SK-N-SH (cell line): ENCODE measurements at regions of chr2 and their contacts with region 1.

Region 1: DNA sequence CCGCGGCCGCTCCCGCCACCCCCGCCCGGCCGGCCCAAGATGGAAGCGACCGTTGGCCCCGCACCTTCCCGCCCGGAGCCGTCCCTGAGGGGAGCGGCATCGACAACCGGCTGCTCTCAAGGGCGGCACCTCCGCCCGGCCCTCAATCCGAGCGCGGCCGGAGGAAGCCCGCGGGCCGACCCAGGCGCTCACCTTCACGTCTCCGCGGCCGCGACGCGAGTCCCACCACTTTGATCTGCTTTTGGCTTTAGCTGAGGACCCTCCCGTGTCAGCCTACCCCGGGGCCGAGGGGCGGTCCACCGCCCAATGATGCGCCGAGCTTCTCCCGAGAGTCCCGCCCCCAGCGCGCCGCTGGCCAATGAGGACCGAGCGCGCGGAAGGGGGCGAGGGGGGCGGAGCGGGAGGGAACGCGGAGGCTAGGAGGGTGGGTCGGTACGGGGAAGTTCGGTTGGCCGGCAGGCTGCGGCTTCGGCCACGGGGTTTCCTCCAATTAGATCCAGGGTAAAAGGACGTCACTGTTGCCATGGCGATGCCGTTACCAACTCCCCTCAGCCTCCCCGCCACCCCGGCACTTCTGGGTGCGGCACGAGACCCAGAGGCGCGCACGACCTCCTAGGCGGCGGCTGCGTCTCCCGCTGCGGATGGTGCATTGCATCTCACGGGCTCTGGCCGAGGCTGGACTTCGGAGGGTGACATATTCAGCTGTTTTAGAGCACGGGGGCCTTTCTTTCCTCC is at the start of gene YWHAQ:
- DNase-seq: peak; percentile 100
- H3K4me3 ChIP-seq: peak within 1 kb of the TSS; percentile 84
- H3K27ac ChIP-seq: peak within 1 kb of the TSS; percentile 74 to 95
- H3K4me1 ChIP-seq: peaks cover 15 to 29% of the 10 kb centered on the region in 2 experiments; a peak in 3 of 4 replicates
- H3K27me3 ChIP-seq: no peaks in the 10 kb centered on the region
- CTCF ChIP-seq: no peak
- EP300 ChIP-seq: peak; percentile 45 to 46; a peak in 2 of 4 replicates
- RAD21 ChIP-seq: peak; percentile 33
- polyA plus RNA-seq, gene YWHAQ: 235 and 240 TPM in 2 replicates

Region 2: DNA sequence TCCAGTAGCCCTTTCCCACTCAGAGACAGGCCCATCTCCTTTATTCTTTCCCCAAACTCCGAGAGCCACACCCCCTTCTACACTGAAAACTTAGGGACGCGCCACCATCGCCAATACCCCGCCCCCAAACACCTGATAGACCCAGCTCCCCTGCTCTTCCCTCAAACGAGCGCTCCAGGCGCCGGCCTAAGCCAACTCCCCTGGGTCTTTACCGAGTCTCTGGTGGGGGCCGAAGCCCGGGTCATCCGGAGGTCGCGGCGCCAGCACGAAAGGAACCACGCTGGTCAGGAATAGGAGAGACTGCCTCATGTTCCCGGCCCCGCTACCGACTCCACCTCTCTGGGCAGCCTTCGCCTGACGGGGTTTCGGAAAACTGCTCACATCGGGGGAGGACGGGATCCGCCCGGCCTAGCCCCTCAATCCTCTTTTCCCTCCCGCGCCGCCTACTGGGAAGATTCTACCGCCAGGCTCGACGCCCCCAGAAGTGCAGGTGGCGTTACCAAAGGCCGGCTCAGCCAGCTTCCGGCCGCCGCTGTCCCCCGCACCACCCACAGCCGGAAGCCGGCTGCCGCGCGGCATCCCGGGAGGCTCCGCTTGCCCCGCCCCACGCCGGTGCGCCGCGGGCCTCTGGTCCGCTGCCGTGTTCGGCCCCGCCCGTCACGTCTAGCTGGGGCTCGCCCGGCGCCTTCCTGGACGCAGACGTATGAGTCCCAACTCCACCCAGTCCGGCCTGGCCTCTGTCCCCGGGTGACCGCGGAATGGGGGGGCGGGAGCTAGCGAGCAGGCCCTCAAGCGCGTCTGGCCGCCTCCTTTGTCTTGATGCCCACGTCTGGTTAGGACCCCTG is 75.4 kb before region 1 on chr2 and contains the start of gene ADAM17:
- CTCF ChIA-PET with region 1: interaction called, 7 read pairs
- POLR2A ChIA-PET with region 1: interaction called, 73 read pairs
- DNase-seq: peak; percentile 99
- H3K4me3 ChIP-seq: peak within 1 kb of the TSS; percentile 96 to 97
- H3K27ac ChIP-seq: peak within 1 kb of the TSS; percentile 98 to 99
- H3K4me1 ChIP-seq: peaks cover 13 to 23% of the 10 kb centered on the region in 2 experiments; a peak in 3 of 4 replicates
- H3K27me3 ChIP-seq: no peaks in the 10 kb centered on the region
- CTCF ChIP-seq: peak; percentile 55
- EP300 ChIP-seq: peak; percentile 27 to 44; a peak in 3 of 4 replicates
- RAD21 ChIP-seq: no peak; the same call in none of the 2 replicates
- polyA plus RNA-seq, gene ADAM17: 12.8 and 17.1 TPM in 2 replicates

Region 3: DNA sequence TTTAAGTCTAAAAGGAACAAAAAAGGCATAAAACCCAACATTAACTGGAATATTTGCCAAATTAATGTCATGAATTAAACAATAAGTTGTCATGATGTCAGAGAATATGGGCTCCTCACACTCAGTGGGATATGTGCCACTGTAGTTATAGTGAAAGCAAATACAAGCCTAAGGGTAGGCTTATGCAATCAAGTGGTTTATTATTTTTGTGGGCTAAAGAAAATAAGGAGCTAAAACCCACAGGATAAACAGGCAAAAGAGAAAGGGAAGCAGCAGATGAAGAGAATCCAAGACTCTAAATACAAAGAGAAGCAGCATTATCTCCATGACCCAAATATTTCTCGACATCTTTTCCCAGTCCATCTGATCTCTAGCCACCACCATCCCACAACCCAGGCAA is 17.6 kb before region 1 on chr2:
- CTCF ChIA-PET with region 1: interaction called, 7 read pairs
- POLR2A ChIA-PET with region 1: interaction called, 31 read pairs
- DNase-seq: no peak
- H3K4me3 ChIP-seq: no peak overlapping the region
- H3K27ac ChIP-seq: peak overlapping the region in 1 of 2 experiments; percentile 34; a peak in 2 of 4 replicates
- H3K4me1 ChIP-seq: peaks cover 4 to 39% of the 10 kb centered on the region in 2 experiments
- H3K27me3 ChIP-seq: no peaks in the 10 kb centered on the region
- CTCF ChIP-seq: no peak
- EP300 ChIP-seq: no peak
- RAD21 ChIP-seq: no peak

Region 4: DNA sequence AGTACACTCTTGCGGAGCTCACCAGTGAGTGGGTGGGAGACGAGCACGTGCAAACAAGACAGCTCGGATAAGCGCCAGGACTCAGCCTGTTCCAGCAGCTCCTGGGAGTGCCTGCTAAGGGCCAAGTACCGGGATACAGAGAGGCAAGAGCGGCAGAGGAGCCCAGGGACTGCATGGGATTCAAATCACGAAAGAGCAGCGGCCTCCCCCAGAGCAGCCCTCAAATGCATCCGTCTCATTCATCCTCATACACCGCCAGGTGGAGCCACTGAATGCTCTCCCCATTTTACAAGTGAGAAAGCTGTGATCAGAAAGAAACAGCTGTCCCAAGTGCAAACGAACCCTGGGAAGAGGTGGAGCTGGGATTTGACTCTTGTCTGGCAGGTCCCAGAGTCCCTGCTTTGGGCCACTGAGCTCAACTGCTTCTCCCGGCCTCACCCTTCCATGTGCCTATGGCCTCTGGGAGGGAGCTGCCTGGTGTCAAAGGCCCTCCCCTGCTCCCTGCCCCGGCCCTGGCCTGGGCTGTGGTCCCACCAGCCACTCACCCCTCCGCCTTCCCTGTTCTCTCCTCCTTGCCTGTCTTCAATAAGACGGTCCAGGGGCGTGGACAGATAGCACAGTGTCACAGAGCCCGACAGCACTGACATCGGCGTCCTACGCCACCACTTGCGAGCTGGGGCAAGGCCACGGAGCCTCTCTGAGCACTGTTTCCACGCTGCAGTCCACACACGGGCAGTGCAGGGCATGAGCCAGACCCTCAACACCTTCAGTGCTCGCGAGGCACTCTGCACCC is 139.6 kb after region 1 on chr2:
- CTCF ChIA-PET with region 1: interaction called, 5 read pairs
- POLR2A ChIA-PET with region 1: interaction called, 11 read pairs
- DNase-seq: peak; percentile 79
- H3K4me3 ChIP-seq: no peak overlapping the region
- H3K27ac ChIP-seq: peak overlapping the region in 1 of 2 experiments; percentile 28; a peak in 1 of 4 replicates
- H3K4me1 ChIP-seq: peaks cover 5 to 32% of the 10 kb centered on the region in 2 experiments; a peak in 2 of 4 replicates
- H3K27me3 ChIP-seq: no peaks in the 10 kb centered on the region
- CTCF ChIP-seq: peak; percentile 73
- EP300 ChIP-seq: no peak
- RAD21 ChIP-seq: peak; percentile 57